ENCODE measurements at regions of chr12 and their contacts with region 1.

Region 1: GRCh38 chr12:34022079-34022830 is at the start of gene ALG10:
- DNase-seq: peak; percentile 77 to 97 (median 80)
- ATAC-seq: peak; percentile 100
- H3K4me3 ChIP-seq: peak within 1 kb of the TSS; percentile 82
- H3K27ac ChIP-seq: peak within 1 kb of the TSS; percentile 91
- H3K4me1 ChIP-seq: peaks cover 0 to 4% of the 10 kb centered on the region in 2 experiments; a peak in 1 of 5 replicates
- H3K27me3 ChIP-seq: no peaks in the 10 kb centered on the region
- CTCF ChIP-seq: peak; percentile 46 to 80 (median 56)
- EP300 ChIP-seq: peak; percentile 48
- POLR2A ChIP-seq: peak; percentile 66
- RAD21 ChIP-seq: peak; percentile 58 to 71
- polyA plus RNA-seq, gene ALG10: 2.4 to 3.4 TPM

Region 2: GRCh38 chr12:32755654-32756475 is 1266.4 kb before region 1 on chr12 and contains the start of gene YARS2:
- CTCF ChIA-PET with region 1: interaction called, 21 read pairs
- POLR2A ChIA-PET with region 1: no interaction called
- in situ Hi-C with region 1: loop called (anchors 5 kb)
- intact Hi-C with region 1: loop called (anchors 1 kb)
- DNase-seq: peak; percentile 83 to 98 (median 88)
- ATAC-seq: peak; percentile 95
- H3K4me3 ChIP-seq: peak within 1 kb of the TSS; percentile 73
- H3K27ac ChIP-seq: peak within 1 kb of the TSS; percentile 69
- H3K4me1 ChIP-seq: peaks cover 4 to 5% of the 10 kb centered on the region in 2 experiments; a peak in 1 of 5 replicates
- H3K27me3 ChIP-seq: no peaks in the 10 kb centered on the region
- CTCF ChIP-seq: peak; percentile 74 to 90 (median 89)
- EP300 ChIP-seq: no peak
- POLR2A ChIP-seq: peak; percentile 97
- RAD21 ChIP-seq: peak; percentile 95 to 97
- polyA plus RNA-seq, gene YARS2: 15.2 to 18.4 TPM

Region 3: GRCh38 chr12:32947206-32948067 is 1074.8 kb before region 1 on chr12:
- CTCF ChIA-PET with region 1: interaction called, 12 read pairs
- POLR2A ChIA-PET with region 1: no interaction called
- in situ Hi-C with region 1: loop called (anchors 5 kb)
- intact Hi-C with region 1: loop called (anchors 2 kb)
- DNase-seq: peak in 2 of 4 experiments; percentile 8 to 40
- ATAC-seq: peak; percentile 75
- H3K4me3 ChIP-seq: no peak overlapping the region
- H3K27ac ChIP-seq: peak overlapping the region; percentile 55; the same call in 1 of the 3 replicates
- H3K4me1 ChIP-seq: no peaks in the 10 kb centered on the region; a peak in 1 of 5 replicates
- H3K27me3 ChIP-seq: no peaks in the 10 kb centered on the region
- CTCF ChIP-seq: peak in 2 of 3 experiments; percentile 23 to 50; a peak in 3 of 6 replicates
- EP300 ChIP-seq: no peak
- POLR2A ChIP-seq: no peak
- RAD21 ChIP-seq: peak; percentile 69 to 81

Region 4: GRCh38 chr12:33223933-33224332 is 798.3 kb before region 1 on chr12:
- CTCF ChIA-PET with region 1: no interaction called
- POLR2A ChIA-PET with region 1: no interaction called
- in situ Hi-C with region 1: loop called (anchors 25 kb)
- intact Hi-C with region 1: no loop called
- DNase-seq: no peak
- ATAC-seq: no peak
- H3K4me3 ChIP-seq: no peak overlapping the region
- H3K27ac ChIP-seq: no peak overlapping the region
- H3K4me1 ChIP-seq: no peaks in the 10 kb centered on the region
- H3K27me3 ChIP-seq: no peaks in the 10 kb centered on the region
- CTCF ChIP-seq: no peak
- EP300 ChIP-seq: no peak
- POLR2A ChIP-seq: no peak
- RAD21 ChIP-seq: no peak

Region 5: GRCh38 chr12:33450480-33450879 is 571.8 kb before region 1 on chr12:
- CTCF ChIA-PET with region 1: no interaction called
- POLR2A ChIA-PET with region 1: no interaction called
- in situ Hi-C with region 1: no loop called
- intact Hi-C with region 1: loop called (anchors 5 kb)
- DNase-seq: no peak
- ATAC-seq: no peak
- H3K4me3 ChIP-seq: no peak overlapping the region
- H3K27ac ChIP-seq: no peak overlapping the region
- H3K4me1 ChIP-seq: no peaks in the 10 kb centered on the region
- H3K27me3 ChIP-seq: no peaks in the 10 kb centered on the region
- CTCF ChIP-seq: no peak
- EP300 ChIP-seq: no peak
- POLR2A ChIP-seq: no peak
- RAD21 ChIP-seq: no peak